ENCODE measurements at regions of chr17 and their contacts with region 1.

Region 1: DNA sequence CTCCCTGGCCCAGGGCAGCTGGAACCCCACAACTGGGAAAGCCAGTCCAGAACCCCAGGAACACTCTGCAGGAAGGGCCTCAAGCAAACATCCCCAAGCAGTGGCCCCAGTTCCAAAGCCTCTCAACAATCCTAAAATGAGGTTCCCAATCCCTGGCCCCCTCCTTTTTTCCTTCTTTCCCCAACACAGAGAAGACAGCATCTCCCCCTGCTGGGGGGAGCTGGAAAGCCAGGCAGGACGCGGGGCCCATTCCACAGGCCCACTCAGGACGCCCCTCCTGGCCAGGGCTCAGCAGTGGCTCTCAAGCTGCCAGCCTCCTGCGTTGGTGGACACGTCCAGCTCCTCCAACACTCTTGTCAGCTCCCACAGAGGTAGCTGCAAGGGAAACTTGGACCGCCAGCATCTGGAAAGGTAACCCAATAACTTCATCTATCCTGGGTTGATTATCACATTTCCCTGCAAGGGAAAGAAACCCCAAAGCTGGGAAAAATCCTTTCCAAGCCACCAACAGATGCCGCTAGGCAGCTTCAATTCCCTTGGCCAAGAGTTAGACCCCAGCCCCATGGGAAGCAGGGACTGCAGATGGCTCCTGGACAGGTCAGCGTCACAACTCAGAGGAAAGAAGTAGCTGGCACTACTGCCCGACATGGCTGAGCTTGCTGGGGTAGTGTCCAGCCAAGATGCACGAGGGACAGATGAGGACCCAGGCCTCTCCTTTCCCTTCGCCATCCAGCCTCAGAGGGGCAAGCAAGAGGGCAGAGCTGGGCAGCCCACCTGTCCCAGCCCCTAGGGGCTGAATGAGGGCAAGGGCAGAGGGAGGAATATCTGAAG is 7.6 kb downstream of the HDAC5 start:
- DNase-seq: no peak
- H3K4me3 ChIP-seq: no peak overlapping the region
- H3K27ac ChIP-seq: peak overlapping the region in 1 of 4 donors; percentile 19
- H3K4me1 ChIP-seq: peaks cover 14 to 33% (median 22%) of the 10 kb centered on the region in 4 donors
- H3K27me3 ChIP-seq: no peaks in the 10 kb centered on the region
- CTCF ChIP-seq: peak; percentile 56 to 68 (median 61)
- EP300 ChIP-seq: no peak
- POLR2A ChIP-seq: no peak

Region 2: DNA sequence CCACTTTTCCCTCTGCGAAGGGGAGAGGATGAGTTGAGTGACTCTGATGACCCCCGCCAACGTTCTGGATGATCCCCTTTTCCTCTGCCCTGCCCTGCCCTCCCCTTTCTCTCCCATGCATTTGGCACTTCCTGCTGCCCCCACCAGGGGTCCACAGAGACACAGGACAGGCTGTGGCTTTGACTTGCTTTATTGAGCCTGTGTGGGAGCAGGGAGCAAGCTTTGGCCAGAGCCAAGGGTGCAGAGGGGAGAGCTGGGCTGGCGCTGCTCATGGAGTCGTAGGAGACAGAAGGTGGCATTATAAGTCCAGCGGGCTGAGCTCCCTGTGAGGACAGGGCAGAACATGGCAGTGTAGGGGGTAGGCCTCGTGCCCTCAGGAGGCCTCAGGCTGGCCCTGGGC is 175.2 kb before region 1 on chr17:
- in situ Hi-C with region 1: no loop called
- intact Hi-C with region 1: no loop called
- DNase-seq: no peak
- H3K4me3 ChIP-seq: no peak overlapping the region
- H3K27ac ChIP-seq: no peak overlapping the region
- H3K4me1 ChIP-seq: peaks cover 3 to 8% (median 6%) of the 10 kb centered on the region in 4 donors
- H3K27me3 ChIP-seq: peaks cover 34% of the 10 kb centered on the region
- CTCF ChIP-seq: peak in 4 of 5 experiments; percentile 7 to 27 (median 20)
- EP300 ChIP-seq: no peak
- POLR2A ChIP-seq: no peak

Region 3: GRCh38 chr17:44141717-44142285 is 26.0 kb after region 1 on chr17 and contains the start of gene HROB:
- in situ Hi-C with region 1: no loop called
- intact Hi-C with region 1: loop called (anchors 1 kb)
- DNase-seq: peak; percentile 98
- H3K4me3 ChIP-seq: peak within 1 kb of the TSS; percentile 62 to 71 (median 66)
- H3K27ac ChIP-seq: peak within 1 kb of the TSS in 3 of 4 donors; percentile 55 to 80 (median 69)
- H3K4me1 ChIP-seq: peaks cover 0 to 26% (median 17%) of the 10 kb centered on the region in 4 donors
- H3K27me3 ChIP-seq: no peaks in the 10 kb centered on the region
- CTCF ChIP-seq: peak; percentile 86 to 95 (median 91)
- EP300 ChIP-seq: no peak
- POLR2A ChIP-seq: no peak
- total RNA-seq, gene HROB: 0.32 to 16.9 (median 8.5) TPM